MCF 10A (cell line): ENCODE measurements at regions of chr5 and their contacts with region 1.

Region 1: GRCh38 chr5:52693280-52693679 is 94.4 kb upstream of the ITGA1 start:
- DNase-seq: peak; percentile 55
- H3K4me3 Mint-ChIP-seq: no peak overlapping the region
- H3K27ac Mint-ChIP-seq: no peak overlapping the region
- H3K4me1 Mint-ChIP-seq: no peaks in the 10 kb centered on the region
- H3K27me3 Mint-ChIP-seq: peaks cover 57% of the 10 kb centered on the region
- CTCF ChIP-seq: peak; percentile 41

Region 2: DNA sequence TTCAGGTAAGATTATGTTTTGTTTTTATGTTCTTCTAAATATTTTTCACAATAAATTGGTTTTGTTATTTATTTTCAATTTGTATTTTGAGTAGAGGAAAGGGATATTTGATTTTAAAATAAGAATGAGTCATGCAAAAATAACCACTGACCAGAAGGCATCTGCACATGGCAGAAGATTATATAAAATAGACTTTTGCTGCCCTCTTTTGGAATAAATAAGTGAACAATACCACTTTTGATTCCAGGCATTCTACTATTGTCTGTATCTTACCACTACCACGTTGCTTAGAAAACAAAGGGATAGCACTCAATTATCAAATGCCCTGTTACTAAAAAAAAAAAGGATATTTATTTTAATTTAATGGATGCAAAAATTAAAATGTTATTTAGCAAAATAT is 132.9 kb before region 1 on chr5:
- CTCF ChIA-PET with region 1: no interaction called
- POLR2A ChIA-PET with region 1: no interaction called
- intact Hi-C with region 1: no loop called
- DNase-seq: peak; percentile 12
- H3K4me3 Mint-ChIP-seq: no peak overlapping the region
- H3K27ac Mint-ChIP-seq: no peak overlapping the region
- H3K4me1 Mint-ChIP-seq: no peaks in the 10 kb centered on the region
- H3K27me3 Mint-ChIP-seq: peaks cover 65% of the 10 kb centered on the region
- CTCF ChIP-seq: peak; percentile 28

Region 3: GRCh38 chr5:52746539-52746938 is 53.3 kb after region 1 on chr5:
- CTCF ChIA-PET with region 1: no interaction called
- POLR2A ChIA-PET with region 1: no interaction called
- intact Hi-C with region 1: no loop called
- DNase-seq: no peak
- H3K4me3 Mint-ChIP-seq: no peak overlapping the region
- H3K27ac Mint-ChIP-seq: no peak overlapping the region
- H3K4me1 Mint-ChIP-seq: no peaks in the 10 kb centered on the region
- H3K27me3 Mint-ChIP-seq: no peaks in the 10 kb centered on the region
- CTCF ChIP-seq: no peak

Region 4: GRCh38 chr5:52787600-52788504 is 94.6 kb after region 1 on chr5 and contains the starts of genes ITGA1 and PELO:
- CTCF ChIA-PET with region 1: interaction called, 7 read pairs
- POLR2A ChIA-PET with region 1: no interaction called
- intact Hi-C with region 1: loop called (anchors 1 kb)
- DNase-seq: peak; percentile 83
- H3K4me3 Mint-ChIP-seq: peak within 1 kb of the TSS; percentile 94
- H3K27ac Mint-ChIP-seq: peak within 1 kb of the TSS; percentile 72
- H3K4me1 Mint-ChIP-seq: peaks cover 28% of the 10 kb centered on the region
- H3K27me3 Mint-ChIP-seq: no peaks in the 10 kb centered on the region
- CTCF ChIP-seq: no peak
- total RNA-seq, gene ITGA1: 5.3 and 7.7 TPM in 2 replicates
- total RNA-seq, gene PELO: 22.5 and 23.1 TPM in 2 replicates

Region 5: GRCh38 chr5:52922386-52922785 is 229.1 kb after region 1 on chr5:
- CTCF ChIA-PET with region 1: interaction called, 11 read pairs
- POLR2A ChIA-PET with region 1: interaction called, 3 read pairs
- intact Hi-C with region 1: no loop called
- DNase-seq: peak; percentile 100
- H3K4me3 Mint-ChIP-seq: no peak overlapping the region
- H3K27ac Mint-ChIP-seq: peak overlapping the region; percentile 25
- H3K4me1 Mint-ChIP-seq: peaks cover 10% of the 10 kb centered on the region
- H3K27me3 Mint-ChIP-seq: no peaks in the 10 kb centered on the region
- CTCF ChIP-seq: no peak